Activated CD8-positive, alpha-beta T cell treated with anti-CD3 and anti-CD28 coated beads, Interleukin-2, amount 10 ng/mL, durations not matched to agents 7 days and 5 days (primary cell): ENCODE measurements at regions of chr2 and their contacts with region 1.

Region 1: GRCh38 chr2:70132244-70133126 is 45.2 kb downstream of the PCBP1 start:
- DNase-seq: peak; percentile 65
- ATAC-seq: peak; percentile 43
- H3K4me3 Mint-ChIP-seq: peak overlapping the region; percentile 84
- H3K27ac Mint-ChIP-seq: peak overlapping the region; percentile 98
- H3K4me1 Mint-ChIP-seq: peaks cover 79% of the 10 kb centered on the region
- H3K27me3 Mint-ChIP-seq: no peaks in the 10 kb centered on the region

Region 2: GRCh38 chr2:70070541-70071268 is 61.8 kb before region 1 on chr2:
- CTCF ChIA-PET with region 1: interaction called, 54 read pairs
- POLR2A ChIA-PET with region 1: interaction called, 5 read pairs
- DNase-seq: peak; percentile 81
- ATAC-seq: peak; percentile 80
- H3K4me3 Mint-ChIP-seq: peak overlapping the region; percentile 57
- H3K27ac Mint-ChIP-seq: peak overlapping the region; percentile 87
- H3K4me1 Mint-ChIP-seq: peaks cover 47% of the 10 kb centered on the region
- H3K27me3 Mint-ChIP-seq: no peaks in the 10 kb centered on the region

Region 3: DNA sequence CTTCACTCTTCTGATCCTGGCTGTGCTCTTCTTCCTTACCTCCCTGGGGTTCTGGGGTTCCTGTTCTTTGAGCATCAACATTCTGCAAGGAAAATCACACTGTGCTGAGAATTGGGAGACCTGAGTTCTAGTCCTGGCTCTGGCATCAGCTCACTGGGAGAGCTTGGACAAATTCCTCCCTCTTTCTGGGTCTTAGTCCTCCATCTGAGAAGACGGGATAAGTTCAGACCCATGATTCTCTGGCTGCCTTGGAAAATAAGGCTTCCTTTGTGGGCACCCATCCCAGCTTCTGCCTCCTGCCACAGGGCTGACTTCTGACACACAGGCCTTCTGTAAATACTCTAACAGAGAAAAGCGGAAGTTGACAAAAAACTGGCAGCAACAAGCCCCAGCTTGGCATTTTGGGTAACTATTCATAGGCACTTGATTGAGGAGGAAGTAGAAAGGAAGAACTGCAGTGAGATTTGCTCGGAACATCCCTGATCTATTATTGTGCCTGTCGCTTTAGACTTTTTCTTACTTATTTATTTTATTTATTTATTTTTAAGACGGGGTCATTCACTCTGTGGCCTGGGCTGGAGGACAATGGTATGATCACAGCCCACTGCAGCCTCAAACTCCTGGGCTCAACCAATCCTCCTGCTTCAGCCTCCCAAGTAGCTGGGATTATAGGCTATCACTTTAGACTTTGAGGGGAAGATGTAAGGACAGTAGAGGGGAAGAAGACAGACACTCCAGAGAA is 37.3 kb before region 1 on chr2:
- CTCF ChIA-PET with region 1: interaction called, 18 read pairs
- POLR2A ChIA-PET with region 1: interaction called, 370 read pairs
- DNase-seq: peak; percentile 74
- ATAC-seq: peak; percentile 72
- H3K4me3 Mint-ChIP-seq: peak overlapping the region; percentile 70
- H3K27ac Mint-ChIP-seq: peak overlapping the region; percentile 84
- H3K4me1 Mint-ChIP-seq: peaks cover 56% of the 10 kb centered on the region
- H3K27me3 Mint-ChIP-seq: no peaks in the 10 kb centered on the region

Region 4: GRCh38 chr2:70104231-70105111 is 28.0 kb before region 1 on chr2:
- CTCF ChIA-PET with region 1: interaction called, 24 read pairs
- POLR2A ChIA-PET with region 1: interaction called, 36 read pairs
- DNase-seq: peak; percentile 64
- ATAC-seq: no peak
- H3K4me3 Mint-ChIP-seq: peak overlapping the region; percentile 77
- H3K27ac Mint-ChIP-seq: peak overlapping the region; percentile 95
- H3K4me1 Mint-ChIP-seq: peaks cover 62% of the 10 kb centered on the region
- H3K27me3 Mint-ChIP-seq: no peaks in the 10 kb centered on the region

Region 5: GRCh38 chr2:70115646-70116442 is 16.6 kb before region 1 on chr2:
- CTCF ChIA-PET with region 1: interaction called, 20 read pairs
- POLR2A ChIA-PET with region 1: interaction called, 36 read pairs
- DNase-seq: peak; percentile 37
- ATAC-seq: peak; percentile 35
- H3K4me3 Mint-ChIP-seq: peak overlapping the region; percentile 22
- H3K27ac Mint-ChIP-seq: peak overlapping the region; percentile 69
- H3K4me1 Mint-ChIP-seq: peaks cover 58% of the 10 kb centered on the region
- H3K27me3 Mint-ChIP-seq: no peaks in the 10 kb centered on the region

Region 6: DNA sequence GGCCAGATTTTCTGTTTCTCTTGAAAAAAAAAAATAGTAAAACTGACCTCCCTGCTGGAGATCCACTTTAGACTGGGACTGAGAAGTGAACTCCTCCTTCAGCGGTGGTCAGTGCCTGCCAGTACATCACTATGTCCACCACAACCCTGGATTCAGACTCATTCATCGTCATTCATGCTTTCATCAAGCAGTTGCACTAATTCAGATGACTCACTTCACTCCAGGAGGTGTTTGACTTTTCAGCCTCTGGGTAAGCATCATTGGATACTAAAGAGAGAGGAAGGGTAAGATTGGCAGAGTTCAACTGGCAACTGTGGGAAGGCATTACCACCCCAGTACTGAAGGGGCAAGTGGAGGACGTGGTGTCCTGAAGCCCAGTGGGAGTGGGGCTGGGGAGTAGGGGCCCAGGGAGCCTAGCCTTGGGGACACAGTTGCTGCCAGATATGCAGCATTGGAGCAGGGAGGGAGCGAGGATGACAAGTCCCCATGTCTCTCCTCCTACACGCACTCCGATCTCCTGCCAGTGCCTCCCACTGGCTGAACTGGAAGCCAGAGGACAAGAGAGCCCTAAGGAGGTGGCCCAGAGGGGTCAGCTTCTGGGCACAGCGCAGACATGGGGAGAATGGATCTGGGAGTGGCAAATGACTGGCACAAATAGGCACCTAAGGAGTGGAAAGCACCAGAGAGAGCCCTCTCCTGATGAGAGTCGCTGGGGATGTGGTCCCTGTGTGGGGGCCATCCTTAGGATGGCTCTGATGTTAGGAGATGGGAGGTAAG is 310.0 kb after region 1 on chr2:
- CTCF ChIA-PET with region 1: no interaction called
- POLR2A ChIA-PET with region 1: no interaction called
- DNase-seq: peak; percentile 17
- ATAC-seq: no peak
- H3K4me3 Mint-ChIP-seq: no peak overlapping the region
- H3K27ac Mint-ChIP-seq: peak overlapping the region; percentile 34
- H3K4me1 Mint-ChIP-seq: peaks cover 28% of the 10 kb centered on the region
- H3K27me3 Mint-ChIP-seq: peaks cover 1% of the 10 kb centered on the region